PC-9 (cell line): ENCODE measurements at regions of chr3 and their contacts with region 1.

Region 1: GRCh38 chr3:196136026-196136984 is 54.4 kb upstream of the TFRC start:
- DNase-seq: peak; percentile 90 to 99
- H3K4me3 ChIP-seq: peak overlapping the region; percentile 15; the same call in 1 of the 2 replicates
- H3K27ac ChIP-seq: peak overlapping the region; percentile 85
- H3K4me1 ChIP-seq: peaks cover 70% of the 10 kb centered on the region
- H3K27me3 ChIP-seq: no peaks in the 10 kb centered on the region
- CTCF ChIP-seq: no peak

Region 2: GRCh38 chr3:196081791-196082618 is 54.3 kb before region 1 on chr3 and contains the start of gene TFRC:
- CTCF ChIA-PET with region 1: interaction called, 3 read pairs
- POLR2A ChIA-PET with region 1: no interaction called
- intact Hi-C with region 1: loop called (anchors 1 kb)
- DNase-seq: peak; percentile 94 to 98
- H3K4me3 ChIP-seq: peak within 1 kb of the TSS; percentile 77
- H3K27ac ChIP-seq: peak within 1 kb of the TSS; percentile 76
- H3K4me1 ChIP-seq: peaks cover 28% of the 10 kb centered on the region
- H3K27me3 ChIP-seq: no peaks in the 10 kb centered on the region
- CTCF ChIP-seq: no peak
- total RNA-seq, gene TFRC: 134 and 195 TPM in 2 replicates

Region 3: DNA sequence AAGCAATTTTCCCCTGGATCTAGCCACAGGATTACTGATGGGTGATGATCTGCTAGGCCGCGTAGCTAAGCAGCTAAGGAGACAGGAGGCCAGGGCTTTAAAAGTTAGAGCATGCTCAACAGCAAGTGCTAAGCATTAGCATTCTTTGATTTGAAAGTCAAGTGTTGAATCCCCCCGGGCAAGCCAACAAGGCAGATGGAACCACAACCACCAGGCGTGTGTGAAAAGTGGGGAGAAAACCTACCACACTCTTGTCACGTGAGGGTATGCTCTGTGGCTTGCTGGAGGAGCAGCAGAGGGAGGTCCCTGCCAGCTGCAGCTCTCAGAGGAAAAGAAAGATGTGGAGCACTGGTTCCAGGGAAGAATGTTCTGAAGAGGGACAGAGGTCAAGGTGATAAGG is 100.9 kb after region 1 on chr3:
- CTCF ChIA-PET with region 1: no interaction called
- POLR2A ChIA-PET with region 1: no interaction called
- intact Hi-C with region 1: no loop called
- DNase-seq: no peak
- H3K4me3 ChIP-seq: no peak overlapping the region
- H3K27ac ChIP-seq: no peak overlapping the region
- H3K4me1 ChIP-seq: no peaks in the 10 kb centered on the region
- H3K27me3 ChIP-seq: no peaks in the 10 kb centered on the region
- CTCF ChIP-seq: no peak

Region 4: GRCh38 chr3:196463804-196464203 is 327.5 kb after region 1 on chr3:
- CTCF ChIA-PET with region 1: no interaction called
- POLR2A ChIA-PET with region 1: interaction called, 10 read pairs
- intact Hi-C with region 1: no loop called
- DNase-seq: no peak
- H3K4me3 ChIP-seq: no peak overlapping the region
- H3K27ac ChIP-seq: no peak overlapping the region
- H3K4me1 ChIP-seq: no peaks in the 10 kb centered on the region
- H3K27me3 ChIP-seq: no peaks in the 10 kb centered on the region
- CTCF ChIP-seq: no peak